Mammary epithelial cell (primary cell): ENCODE measurements at regions of chr2 and their contacts with region 1.

Region 1: DNA sequence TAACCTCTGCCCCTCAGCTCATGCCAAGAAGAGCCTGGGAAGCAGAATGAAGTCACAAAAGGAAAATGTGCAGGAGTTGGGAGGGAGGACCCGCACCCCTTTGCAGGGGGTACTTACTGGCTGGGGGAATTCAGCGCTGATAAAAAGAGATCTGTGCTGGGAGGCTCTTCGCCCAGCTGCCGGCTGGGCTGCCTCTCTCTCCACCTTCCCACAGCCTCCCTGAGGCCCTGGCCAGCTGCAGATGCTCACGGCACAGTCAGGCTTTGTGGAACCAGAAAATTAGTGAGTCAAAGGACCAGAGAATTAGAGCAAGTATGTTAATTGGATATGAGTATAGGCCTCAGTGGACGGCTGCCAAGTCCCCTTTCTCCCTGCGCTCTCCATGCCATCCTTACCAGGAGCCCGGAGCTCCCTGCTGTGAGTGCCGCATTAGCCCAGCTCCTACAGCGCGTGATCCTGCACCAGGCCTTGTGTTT is 181.7 kb upstream of the SH3BP4 start:
- DNase-seq: no peak
- H3K4me3 ChIP-seq: no peak overlapping the region
- H3K27ac ChIP-seq: no peak overlapping the region
- H3K4me1 ChIP-seq: peaks cover 11% of the 10 kb centered on the region
- H3K27me3 ChIP-seq: no peaks in the 10 kb centered on the region
- CTCF ChIP-seq: no peak

Region 2: DNA sequence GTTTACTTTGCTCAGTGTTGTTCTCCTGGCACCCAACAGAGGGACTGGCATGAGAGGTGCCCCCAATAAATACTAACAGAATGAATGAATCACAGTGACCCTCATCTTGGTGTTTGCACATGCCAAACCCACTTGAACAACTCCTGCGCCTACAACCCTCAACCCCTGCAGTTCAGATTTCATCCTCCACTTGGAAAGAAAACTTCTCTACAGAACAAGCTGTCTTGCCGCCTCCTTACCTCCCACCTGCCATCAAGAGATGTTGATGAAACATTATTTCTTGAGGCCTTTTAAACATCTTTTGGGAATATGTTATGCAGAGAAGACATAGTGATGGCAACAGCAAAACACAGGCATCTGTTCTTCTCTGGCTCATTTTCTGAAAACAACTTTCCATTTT is 34.2 kb before region 1 on chr2:
- CTCF ChIA-PET with region 1: no interaction called
- dilution Hi-C with region 1: loop called (anchors 5 kb)
- in situ Hi-C with region 1: no loop called
- intact Hi-C with region 1: no loop called
- DNase-seq: no peak
- H3K4me3 ChIP-seq: no peak overlapping the region
- H3K27ac ChIP-seq: no peak overlapping the region
- H3K4me1 ChIP-seq: no peaks in the 10 kb centered on the region
- H3K27me3 ChIP-seq: no peaks in the 10 kb centered on the region
- CTCF ChIP-seq: no peak